ENCODE measurements at regions of chr16 and their contacts with region 1.

Region 1: DNA sequence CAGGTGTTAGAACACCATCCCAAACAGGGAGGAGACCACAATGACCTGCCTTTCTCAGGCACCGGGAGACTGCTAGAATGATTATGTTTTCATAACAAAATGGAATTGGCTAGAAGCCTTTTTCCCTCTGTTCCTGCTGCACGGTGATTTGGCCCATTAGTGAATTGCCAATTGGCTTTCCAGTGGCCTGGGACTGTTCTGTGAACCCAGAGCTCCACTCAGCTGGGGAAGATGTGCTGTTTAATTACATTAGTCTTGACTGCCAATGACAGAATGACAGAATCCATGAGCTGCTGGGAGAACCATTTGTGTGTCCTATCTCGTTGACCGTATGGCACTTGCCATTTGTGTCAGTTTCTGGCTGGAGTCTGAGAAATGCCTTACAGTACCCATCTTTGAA is 242.9 kb downstream of the CDH11 start:
- DNase-seq: no peak
- ATAC-seq: no peak
- H3K4me3 ChIP-seq: no peak overlapping the region
- H3K27ac ChIP-seq: no peak overlapping the region
- H3K4me1 ChIP-seq: no peaks in the 10 kb centered on the region
- H3K27me3 ChIP-seq: no peaks in the 10 kb centered on the region
- CTCF ChIP-seq: no peak

Region 2: GRCh38 chr16:64809876-64810629 is 68.9 kb before region 1 on chr16:
- intact Hi-C with region 1: loop called in 1 of 2 experiments (anchors 10 kb)
- DNase-seq: no peak
- ATAC-seq: no peak
- H3K4me3 ChIP-seq: no peak overlapping the region
- H3K27ac ChIP-seq: no peak overlapping the region
- H3K4me1 ChIP-seq: no peaks in the 10 kb centered on the region
- H3K27me3 ChIP-seq: no peaks in the 10 kb centered on the region
- CTCF ChIP-seq: no peak

Region 3: DNA sequence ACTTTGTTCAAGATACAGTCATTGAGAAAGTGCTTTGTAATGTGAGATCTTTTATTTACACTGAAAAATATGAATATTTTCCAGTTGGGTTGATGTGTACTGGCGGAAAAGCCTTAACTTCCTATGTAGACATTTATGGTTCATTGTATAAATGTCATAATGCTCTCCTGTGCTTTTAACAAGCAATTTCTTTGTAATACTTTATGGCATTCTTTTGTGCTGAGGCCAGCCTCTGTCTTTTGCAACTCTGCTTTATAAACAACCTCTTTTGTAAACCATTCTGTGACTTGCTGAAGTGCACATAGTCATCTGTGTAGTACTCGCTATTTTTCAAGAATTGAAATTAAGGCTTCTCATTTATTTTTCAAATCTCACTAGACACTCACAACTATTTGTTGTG is 48.3 kb before region 1 on chr16:
- intact Hi-C with region 1: no loop called
- DNase-seq: no peak
- ATAC-seq: no peak
- H3K4me3 ChIP-seq: no peak overlapping the region
- H3K27ac ChIP-seq: no peak overlapping the region
- H3K4me1 ChIP-seq: no peaks in the 10 kb centered on the region
- H3K27me3 ChIP-seq: no peaks in the 10 kb centered on the region
- CTCF ChIP-seq: no peak